Right cardiac atrium (tissue), 5 donors: ENCODE measurements at regions of chr9 and their contacts with region 1.

Region 1: GRCh38 chr9:31119882-31120454 is 1264.5 kb upstream of the ACO1 start:
- DNase-seq: peak in 1 of 3 donors; percentile 10
- ATAC-seq: peak; percentile 34 to 57
- H3K4me3 ChIP-seq: no peak overlapping the region
- H3K27ac ChIP-seq: no peak overlapping the region
- H3K4me1 ChIP-seq: no peaks in the 10 kb centered on the region
- H3K27me3 ChIP-seq: no peaks in the 10 kb centered on the region

Region 2: DNA sequence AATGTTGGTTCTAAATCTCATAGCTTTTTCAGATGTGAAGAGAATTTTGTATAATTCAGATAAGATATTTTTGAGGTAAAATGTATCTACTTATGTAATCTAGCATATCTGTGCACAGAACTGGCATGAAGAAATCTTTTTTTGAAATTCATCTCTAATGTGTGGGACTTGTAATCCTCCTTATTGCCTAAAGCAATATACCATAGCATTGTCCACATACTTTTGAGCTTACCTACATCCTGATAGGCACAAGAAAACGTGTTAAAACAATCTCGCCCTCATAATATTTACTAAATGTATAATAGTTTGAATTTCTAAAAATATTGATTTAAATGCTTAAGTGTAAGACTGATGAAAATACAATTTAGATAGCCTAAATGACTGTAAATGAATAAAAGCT is 422.0 kb before region 1 on chr9:
- intact Hi-C with region 1: no loop called
- DNase-seq: no peak
- ATAC-seq: no peak
- H3K4me3 ChIP-seq: no peak overlapping the region
- H3K27ac ChIP-seq: no peak overlapping the region
- H3K4me1 ChIP-seq: no peaks in the 10 kb centered on the region
- H3K27me3 ChIP-seq: no peaks in the 10 kb centered on the region

Region 3: DNA sequence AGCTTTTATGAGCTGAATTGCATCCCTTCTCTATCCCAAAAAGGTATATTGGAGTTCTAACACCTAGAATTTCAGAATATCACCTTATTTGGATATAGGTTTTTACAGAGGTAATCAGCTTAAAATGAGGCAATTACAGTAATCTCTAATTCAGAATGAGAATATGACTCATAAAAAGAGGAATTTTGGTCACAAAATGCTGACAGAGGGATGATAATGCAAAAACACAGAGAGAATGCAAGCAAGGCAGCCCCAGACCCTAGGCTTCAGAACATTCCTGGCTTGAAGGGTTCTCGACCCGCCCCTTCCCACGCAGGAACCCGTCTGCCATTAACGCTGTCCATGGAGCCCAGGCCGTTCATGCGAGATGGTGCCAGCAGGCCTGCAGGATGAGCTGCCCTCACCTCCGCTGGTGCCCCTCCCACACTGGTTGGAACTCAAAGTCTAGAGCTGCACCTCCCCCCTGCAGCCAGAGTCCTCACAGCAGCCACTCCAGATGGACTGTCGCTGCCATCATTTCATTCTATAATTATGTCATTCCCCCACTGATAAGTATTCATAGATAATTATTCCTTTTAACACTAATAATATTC is 91.1 kb after region 1 on chr9:
- intact Hi-C with region 1: no loop called
- DNase-seq: peak in 2 of 3 donors; percentile 39 to 46
- ATAC-seq: no peak
- H3K4me3 ChIP-seq: no peak overlapping the region
- H3K27ac ChIP-seq: no peak overlapping the region
- H3K4me1 ChIP-seq: no peaks in the 10 kb centered on the region
- H3K27me3 ChIP-seq: no peaks in the 10 kb centered on the region

Region 4: DNA sequence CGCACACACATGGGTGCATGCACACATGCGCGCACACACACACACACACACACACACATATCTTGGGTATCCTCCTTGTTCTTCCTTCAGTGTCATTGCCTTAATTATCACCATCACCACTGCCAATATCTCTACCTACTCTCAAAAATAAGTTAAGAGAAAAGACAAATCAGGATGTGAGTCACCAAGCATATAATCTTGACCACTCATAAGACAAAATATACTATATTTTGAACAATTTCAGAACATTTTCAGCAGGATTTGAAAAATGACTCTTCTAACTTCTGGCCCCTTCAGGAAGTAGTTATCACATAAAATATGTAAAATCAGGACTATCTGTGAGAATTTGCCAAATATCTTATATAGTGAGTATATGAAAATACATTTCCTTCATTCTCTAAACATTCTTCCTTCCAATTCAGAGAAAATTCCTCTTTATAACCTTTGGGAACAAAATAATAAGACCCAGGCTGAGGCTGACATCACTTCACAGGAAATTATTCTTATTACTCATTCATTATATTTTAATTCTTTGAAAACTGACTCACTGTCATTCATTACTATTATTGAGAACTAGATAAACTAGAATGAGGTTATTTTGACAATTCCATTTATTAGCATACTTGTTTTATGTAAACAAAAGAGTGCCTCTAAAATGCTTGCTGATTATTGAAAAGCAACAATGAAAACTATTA is 492.5 kb after region 1 on chr9:
- intact Hi-C with region 1: no loop called
- DNase-seq: no peak
- ATAC-seq: no peak
- H3K4me3 ChIP-seq: no peak overlapping the region
- H3K27ac ChIP-seq: no peak overlapping the region
- H3K4me1 ChIP-seq: no peaks in the 10 kb centered on the region
- H3K27me3 ChIP-seq: no peaks in the 10 kb centered on the region

Region 5: GRCh38 chr9:31799953-31800609 is 680.1 kb after region 1 on chr9:
- intact Hi-C with region 1: loop called in 2 of 4 experiments (anchors 5 to 10 kb)
- DNase-seq: no peak
- ATAC-seq: no peak
- H3K4me3 ChIP-seq: no peak overlapping the region
- H3K27ac ChIP-seq: no peak overlapping the region
- H3K4me1 ChIP-seq: no peaks in the 10 kb centered on the region
- H3K27me3 ChIP-seq: no peaks in the 10 kb centered on the region